Activated CD4-positive, alpha-beta T cell treated with anti-CD3 and anti-CD28 coated beads for 36 hours (primary cell): ENCODE measurements at regions of chr17 and their contacts with region 1.

Region 1: GRCh38 chr17:74368092-74369081 is 1.1 kb downstream of the GPR142 start:
- DNase-seq: peak; percentile 84
- ATAC-seq: peak; percentile 74
- H3K4me3 Mint-ChIP-seq: peak overlapping the region; percentile 15
- H3K27ac Mint-ChIP-seq: no peak overlapping the region
- H3K4me1 Mint-ChIP-seq: peaks cover 13% of the 10 kb centered on the region
- H3K27me3 Mint-ChIP-seq: peaks cover 2% of the 10 kb centered on the region

Region 2: GRCh38 chr17:73782641-73783381 is 585.6 kb before region 1 on chr17:
- CTCF ChIA-PET with region 1: no interaction called
- POLR2A ChIA-PET with region 1: no interaction called
- intact Hi-C with region 1: no loop called
- DNase-seq: peak; percentile 13
- ATAC-seq: no peak
- H3K4me3 Mint-ChIP-seq: no peak overlapping the region
- H3K27ac Mint-ChIP-seq: no peak overlapping the region
- H3K4me1 Mint-ChIP-seq: peaks cover 8% of the 10 kb centered on the region
- H3K27me3 Mint-ChIP-seq: no peaks in the 10 kb centered on the region

Region 3: GRCh38 chr17:74296548-74296936 is 71.8 kb before region 1 on chr17:
- CTCF ChIA-PET with region 1: interaction called, 13 read pairs
- POLR2A ChIA-PET with region 1: no interaction called
- intact Hi-C with region 1: no loop called
- DNase-seq: peak; percentile 59
- ATAC-seq: peak; percentile 24
- H3K4me3 Mint-ChIP-seq: no peak overlapping the region
- H3K27ac Mint-ChIP-seq: no peak overlapping the region
- H3K4me1 Mint-ChIP-seq: peaks cover 23% of the 10 kb centered on the region
- H3K27me3 Mint-ChIP-seq: peaks cover 5% of the 10 kb centered on the region

Region 4: DNA sequence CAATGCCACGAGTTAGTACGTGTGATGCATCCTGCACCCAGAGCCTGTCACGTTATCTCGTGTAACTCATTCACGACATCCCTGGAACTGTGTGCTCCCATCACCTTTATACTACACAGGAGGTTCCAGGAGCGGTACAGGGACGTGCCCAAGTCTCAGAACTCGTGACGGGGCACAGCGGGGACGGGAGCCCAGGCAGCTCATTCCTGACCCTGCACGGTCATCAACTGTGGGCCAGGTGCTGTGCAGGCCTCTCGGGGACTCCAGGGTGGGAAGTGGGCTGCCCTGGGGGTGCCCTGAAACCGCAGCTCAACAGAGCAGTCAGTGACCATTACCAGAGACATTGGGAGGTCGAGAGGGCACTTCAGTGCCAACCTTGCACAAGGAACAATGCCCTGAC is 53.5 kb before region 1 on chr17:
- CTCF ChIA-PET with region 1: no interaction called
- POLR2A ChIA-PET with region 1: no interaction called
- intact Hi-C with region 1: no loop called
- DNase-seq: no peak
- ATAC-seq: no peak
- H3K4me3 Mint-ChIP-seq: no peak overlapping the region
- H3K27ac Mint-ChIP-seq: no peak overlapping the region
- H3K4me1 Mint-ChIP-seq: no peaks in the 10 kb centered on the region
- H3K27me3 Mint-ChIP-seq: no peaks in the 10 kb centered on the region

Region 5: GRCh38 chr17:74354123-74354522 is 14.3 kb before region 1 on chr17:
- CTCF ChIA-PET with region 1: interaction called, 20 read pairs
- POLR2A ChIA-PET with region 1: no interaction called
- intact Hi-C with region 1: no loop called
- DNase-seq: peak; percentile 88
- ATAC-seq: peak; percentile 90
- H3K4me3 Mint-ChIP-seq: no peak overlapping the region
- H3K27ac Mint-ChIP-seq: no peak overlapping the region
- H3K4me1 Mint-ChIP-seq: no peaks in the 10 kb centered on the region
- H3K27me3 Mint-ChIP-seq: peaks cover 53% of the 10 kb centered on the region

Region 6: GRCh38 chr17:74379495-74380085 is 11.2 kb after region 1 on chr17:
- CTCF ChIA-PET with region 1: interaction called, 44 read pairs
- POLR2A ChIA-PET with region 1: no interaction called
- intact Hi-C with region 1: no loop called
- DNase-seq: peak; percentile 97
- ATAC-seq: peak; percentile 97
- H3K4me3 Mint-ChIP-seq: no peak overlapping the region
- H3K27ac Mint-ChIP-seq: no peak overlapping the region
- H3K4me1 Mint-ChIP-seq: no peaks in the 10 kb centered on the region
- H3K27me3 Mint-ChIP-seq: no peaks in the 10 kb centered on the region

Region 7: DNA sequence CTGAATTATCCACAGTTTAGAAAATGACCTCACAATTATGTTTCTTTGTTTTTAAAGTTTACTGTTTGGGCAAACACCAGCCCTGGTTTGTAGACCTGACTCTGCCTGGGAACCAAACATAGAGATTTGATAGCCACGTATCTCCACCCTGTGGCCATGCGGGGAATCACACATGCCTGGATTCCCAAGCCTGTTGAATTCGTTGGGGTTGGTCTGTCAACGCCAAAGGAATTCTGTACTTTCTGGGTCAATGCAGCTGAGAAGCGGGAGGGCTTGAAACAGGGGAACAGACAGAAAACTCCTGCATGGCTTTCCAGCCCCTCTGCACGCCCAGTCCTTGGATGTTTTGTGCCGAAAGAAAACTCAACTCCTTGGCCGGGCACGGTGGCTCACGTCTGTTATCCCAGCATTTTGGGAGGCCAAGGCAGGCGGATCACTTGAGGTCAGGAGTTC is 125.0 kb after region 1 on chr17:
- CTCF ChIA-PET with region 1: interaction called, 9 read pairs
- POLR2A ChIA-PET with region 1: no interaction called
- intact Hi-C with region 1: loop called (anchors 1 kb)
- DNase-seq: peak; percentile 80
- ATAC-seq: peak; percentile 78
- H3K4me3 Mint-ChIP-seq: no peak overlapping the region
- H3K27ac Mint-ChIP-seq: no peak overlapping the region
- H3K4me1 Mint-ChIP-seq: no peaks in the 10 kb centered on the region
- H3K27me3 Mint-ChIP-seq: no peaks in the 10 kb centered on the region

Region 8: GRCh38 chr17:74528491-74529199 is 160.3 kb after region 1 on chr17:
- CTCF ChIA-PET with region 1: interaction called, 16 read pairs
- POLR2A ChIA-PET with region 1: no interaction called
- intact Hi-C with region 1: loop called in 1 of 2 experiments (anchors 2 kb)
- DNase-seq: no peak
- ATAC-seq: peak; percentile 44
- H3K4me3 Mint-ChIP-seq: no peak overlapping the region
- H3K27ac Mint-ChIP-seq: no peak overlapping the region
- H3K4me1 Mint-ChIP-seq: peaks cover 2% of the 10 kb centered on the region
- H3K27me3 Mint-ChIP-seq: peaks cover 7% of the 10 kb centered on the region

Region 9: GRCh38 chr17:74601944-74602572 is 233.7 kb after region 1 on chr17:
- CTCF ChIA-PET with region 1: interaction called, 7 read pairs
- POLR2A ChIA-PET with region 1: no interaction called
- intact Hi-C with region 1: loop called in 1 of 2 experiments (anchors 2 kb)
- DNase-seq: peak; percentile 64
- ATAC-seq: peak; percentile 52
- H3K4me3 Mint-ChIP-seq: no peak overlapping the region
- H3K27ac Mint-ChIP-seq: no peak overlapping the region
- H3K4me1 Mint-ChIP-seq: peaks cover 35% of the 10 kb centered on the region
- H3K27me3 Mint-ChIP-seq: peaks cover 2% of the 10 kb centered on the region

Region 10: GRCh38 chr17:74619077-74619673 is 250.8 kb after region 1 on chr17:
- CTCF ChIA-PET with region 1: no interaction called
- POLR2A ChIA-PET with region 1: no interaction called
- intact Hi-C with region 1: no loop called
- DNase-seq: no peak
- ATAC-seq: no peak
- H3K4me3 Mint-ChIP-seq: no peak overlapping the region
- H3K27ac Mint-ChIP-seq: no peak overlapping the region
- H3K4me1 Mint-ChIP-seq: no peaks in the 10 kb centered on the region
- H3K27me3 Mint-ChIP-seq: peaks cover 25% of the 10 kb centered on the region